Uterus (tissue), 4 donors: ENCODE measurements at regions of chr10 and their contacts with region 1.

Region 1: DNA sequence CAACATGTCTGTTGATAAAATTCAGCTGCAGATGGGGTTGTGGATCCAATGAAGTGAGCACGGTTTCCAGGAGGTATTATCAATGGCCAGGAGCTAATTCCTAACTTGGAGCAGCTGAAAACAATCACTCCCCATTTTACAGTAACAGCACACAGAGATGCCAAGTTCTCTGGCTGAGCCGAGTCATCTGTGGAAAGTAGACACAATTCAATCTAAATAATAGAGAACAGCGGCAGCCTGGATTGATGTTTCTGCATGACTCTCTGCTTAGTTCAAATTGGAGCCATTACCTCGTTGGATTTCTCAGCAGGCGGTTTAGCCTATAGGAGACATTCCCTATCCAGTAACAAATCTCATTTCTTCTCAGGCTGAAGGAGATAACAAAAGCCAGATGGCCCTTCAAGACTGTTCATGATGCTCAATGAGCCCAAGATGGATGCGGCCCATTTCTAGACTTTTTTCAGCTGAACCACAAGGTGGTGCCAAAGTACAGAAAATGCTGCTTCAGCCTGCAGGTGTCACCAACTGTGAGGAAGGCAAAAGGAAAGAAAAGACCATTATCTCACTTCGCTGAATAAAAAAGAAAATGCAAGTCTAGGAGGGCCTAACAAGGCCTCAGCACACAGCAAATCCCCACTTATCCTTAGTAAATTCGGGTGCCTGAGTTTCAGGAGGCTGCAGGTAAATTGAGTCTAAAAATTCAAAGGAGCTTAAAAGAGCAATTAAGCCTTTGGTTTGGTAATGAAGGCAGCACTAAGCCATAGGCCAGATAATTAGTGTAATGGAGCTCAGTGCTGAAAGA is 83.7 kb downstream of the SLC16A9 start:
- DNase-seq: peak; percentile 38 to 61
- H3K4me3 ChIP-seq: no peak overlapping the region
- H3K27ac ChIP-seq: peak overlapping the region; percentile 48 to 54
- H3K4me1 ChIP-seq: no peaks in the 10 kb centered on the region
- H3K27me3 ChIP-seq: no peaks in the 10 kb centered on the region
- CTCF ChIP-seq: peak; percentile 80 to 95 (median 88)
- POLR2A ChIP-seq: no peak

Region 2: GRCh38 chr10:59240582-59241183 is 385.2 kb before region 1 on chr10:
- intact Hi-C with region 1: loop called (anchors 10 kb)
- DNase-seq: no peak
- H3K4me3 ChIP-seq: no peak overlapping the region
- H3K27ac ChIP-seq: peak overlapping the region in 1 of 2 donors; percentile 37
- H3K4me1 ChIP-seq: no peaks in the 10 kb centered on the region
- H3K27me3 ChIP-seq: no peaks in the 10 kb centered on the region
- CTCF ChIP-seq: peak; percentile 65 to 78 (median 72)
- POLR2A ChIP-seq: no peak

Region 3: GRCh38 chr10:59808896-59809643 is 183.1 kb after region 1 on chr10:
- intact Hi-C with region 1: loop called (anchors 5 kb)
- DNase-seq: peak; percentile 74 to 81
- H3K4me3 ChIP-seq: no peak overlapping the region
- H3K27ac ChIP-seq: peak overlapping the region; percentile 29 to 40
- H3K4me1 ChIP-seq: peaks cover 0 to 3% of the 10 kb centered on the region in 2 donors
- H3K27me3 ChIP-seq: no peaks in the 10 kb centered on the region
- CTCF ChIP-seq: peak; percentile 54 to 77 (median 63)
- POLR2A ChIP-seq: no peak